HEK293 (cell line): ENCODE measurements at regions of chr19 and their contacts with region 1.

Region 1: GRCh38 chr19:6767357-6768235 is at the start of gene SH2D3A:
- H3K4me3 ChIP-seq: peak within 1 kb of the TSS; percentile 62
- H3K27ac ChIP-seq: no peak within 1 kb of the TSS
- H3K4me1 ChIP-seq: no peaks in the 10 kb centered on the region; the same call in 1 of the 2 replicates
- CTCF ChIP-seq: no peak

Region 2: GRCh38 chr19:6674868-6675305 is 92.7 kb before region 1 on chr19:
- CTCF ChIA-PET with region 1: no interaction called
- POLR2A ChIA-PET with region 1: no interaction called
- H3K4me3 ChIP-seq: no peak overlapping the region
- H3K27ac ChIP-seq: no peak overlapping the region
- H3K4me1 ChIP-seq: no peaks in the 10 kb centered on the region
- CTCF ChIP-seq: no peak

Region 3: GRCh38 chr19:6737284-6738046 is 30.1 kb before region 1 on chr19 and contains the start of gene GPR108:
- CTCF ChIA-PET with region 1: interaction called, 19 read pairs
- POLR2A ChIA-PET with region 1: interaction called, 4 read pairs
- H3K4me3 ChIP-seq: peak within 1 kb of the TSS; percentile 64
- H3K27ac ChIP-seq: peak within 1 kb of the TSS; percentile 78
- H3K4me1 ChIP-seq: peaks cover 11% of the 10 kb centered on the region
- CTCF ChIP-seq: 0 out of 2 replicates have a peak, but pooled peaks have one; percentile 6

Region 4: GRCh38 chr19:6744381-6745291 is 23.0 kb before region 1 on chr19:
- CTCF ChIA-PET with region 1: interaction called, 6 read pairs
- POLR2A ChIA-PET with region 1: interaction called, 11 read pairs
- H3K4me3 ChIP-seq: 0 out of 2 replicates have a peak overlapping the region, but pooled peaks have one; percentile 0
- H3K27ac ChIP-seq: peak overlapping the region; percentile 74
- H3K4me1 ChIP-seq: peaks cover 25% of the 10 kb centered on the region
- CTCF ChIP-seq: no peak

Region 5: DNA sequence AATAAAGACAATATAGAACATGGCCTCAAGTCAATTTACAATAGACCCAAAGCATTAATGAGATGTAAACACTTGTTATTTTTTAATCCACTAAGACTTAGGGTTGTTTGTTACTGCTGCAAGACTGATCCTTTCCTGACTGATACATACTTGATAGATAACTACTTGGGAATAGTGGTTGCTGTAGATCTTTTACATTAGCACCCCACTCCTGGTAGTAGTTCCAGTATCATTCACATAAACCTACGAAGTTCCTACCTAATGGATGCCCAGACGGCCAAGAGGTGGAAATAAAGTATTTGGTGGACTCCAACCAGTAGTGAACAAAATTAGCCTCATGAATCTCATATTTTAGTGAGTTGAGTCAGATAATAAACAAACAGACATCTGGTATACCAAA is 146.7 kb after region 1 on chr19:
- CTCF ChIA-PET with region 1: no interaction called
- POLR2A ChIA-PET with region 1: no interaction called
- H3K4me3 ChIP-seq: no peak overlapping the region
- H3K27ac ChIP-seq: no peak overlapping the region
- H3K4me1 ChIP-seq: no peaks in the 10 kb centered on the region
- CTCF ChIP-seq: no peak